ENCODE measurements at regions of chr7 and their contacts with region 1.

Region 1: GRCh38 chr7:118836933-118837332 is 612.4 kb downstream of the ANKRD7 start:
- DNase-seq: no peak
- ATAC-seq: no peak
- H3K4me3 ChIP-seq: no peak overlapping the region
- H3K4me3 Mint-ChIP-seq: no peak overlapping the region
- H3K27ac ChIP-seq: no peak overlapping the region
- H3K27ac Mint-ChIP-seq: no peak overlapping the region
- H3K4me1 ChIP-seq: no peaks in the 10 kb centered on the region
- H3K4me1 Mint-ChIP-seq: no peaks in the 10 kb centered on the region
- H3K27me3 ChIP-seq: no peaks in the 10 kb centered on the region
- H3K27me3 Mint-ChIP-seq: no peaks in the 10 kb centered on the region
- CTCF ChIP-seq: no peak

Region 2: GRCh38 chr7:118858651-118859149 is 21.8 kb after region 1 on chr7:
- CTCF ChIA-PET with region 1: no interaction called
- POLR2A ChIA-PET with region 1: no interaction called
- intact Hi-C with region 1: loop called in 1 of 2 experiments (anchors 1 kb)
- DNase-seq: no peak
- ATAC-seq: no peak
- H3K4me3 ChIP-seq: no peak overlapping the region
- H3K4me3 Mint-ChIP-seq: no peak overlapping the region
- H3K27ac ChIP-seq: no peak overlapping the region
- H3K27ac Mint-ChIP-seq: no peak overlapping the region
- H3K4me1 ChIP-seq: no peaks in the 10 kb centered on the region
- H3K4me1 Mint-ChIP-seq: no peaks in the 10 kb centered on the region
- H3K27me3 ChIP-seq: no peaks in the 10 kb centered on the region
- H3K27me3 Mint-ChIP-seq: no peaks in the 10 kb centered on the region
- CTCF ChIP-seq: no peak

Measured in CD8-positive, alpha-beta T cell (primary cell).